Lower leg skin (tissue), 4 donors: ENCODE measurements at regions of chr14 and their contacts with region 1.

Region 1: GRCh38 chr14:83372271-83372670 is 1838.6 kb upstream of the SEL1L start:
- DNase-seq: no peak
- H3K4me3 ChIP-seq: no peak overlapping the region
- CTCF ChIP-seq: no peak
- POLR2A ChIP-seq: no peak

Region 2: DNA sequence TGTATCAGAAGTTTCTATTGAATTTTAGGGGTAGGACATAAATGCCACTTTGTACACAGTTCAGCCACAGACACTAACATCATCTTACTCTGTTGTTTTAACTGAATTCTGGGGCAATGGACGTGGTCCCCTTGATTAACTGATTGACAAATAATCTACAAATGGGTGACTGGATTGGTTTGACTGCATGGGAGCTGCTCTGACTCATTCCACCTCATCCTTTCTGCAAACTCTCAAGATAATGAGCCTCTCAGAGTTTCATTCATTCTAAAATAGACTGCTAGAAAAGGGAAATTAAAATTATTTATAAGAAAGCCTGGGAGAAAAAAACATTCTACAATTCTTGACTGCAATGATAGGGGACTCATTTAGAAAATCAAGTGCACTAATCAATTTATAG is 1268.3 kb before region 1 on chr14:
- intact Hi-C with region 1: loop called (anchors 5 kb)
- DNase-seq: no peak
- H3K4me3 ChIP-seq: no peak overlapping the region
- CTCF ChIP-seq: no peak
- POLR2A ChIP-seq: no peak

Region 3: GRCh38 chr14:83395321-83395720 is 23.1 kb after region 1 on chr14:
- intact Hi-C with region 1: no loop called
- DNase-seq: no peak
- H3K4me3 ChIP-seq: no peak overlapping the region
- CTCF ChIP-seq: no peak
- POLR2A ChIP-seq: no peak

Region 4: DNA sequence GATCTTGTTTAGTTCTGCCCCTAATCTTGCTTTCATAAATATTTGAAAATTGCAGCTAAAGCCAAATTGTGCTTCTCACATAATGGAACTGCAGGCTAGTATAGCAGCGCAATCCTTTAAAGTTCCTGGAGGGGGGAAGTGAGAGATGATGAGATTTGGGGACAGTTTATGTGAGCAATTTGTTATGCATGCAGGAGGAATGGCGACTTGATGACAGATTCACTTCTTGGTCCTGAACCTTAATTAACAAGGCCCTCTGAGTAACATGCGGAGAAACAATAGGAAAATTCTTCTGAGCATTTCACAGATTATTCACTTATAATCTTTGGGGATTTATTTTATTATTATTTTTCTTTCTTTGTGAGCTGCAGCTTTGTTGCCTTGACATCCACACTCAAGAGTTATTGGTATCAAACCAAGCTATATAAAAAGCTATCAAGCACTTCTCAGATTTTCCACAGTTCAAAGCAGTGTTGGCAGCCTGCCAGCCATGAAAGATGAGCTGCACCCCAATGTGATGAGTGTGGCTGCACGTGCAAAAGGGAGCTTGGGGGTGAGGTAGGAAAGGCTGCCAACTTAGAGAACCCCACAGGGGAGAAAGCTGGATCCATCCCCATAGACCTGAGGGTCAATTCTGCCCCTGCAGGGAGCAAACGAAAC is 495.4 kb after region 1 on chr14:
- intact Hi-C with region 1: no loop called
- DNase-seq: no peak
- H3K4me3 ChIP-seq: no peak overlapping the region
- CTCF ChIP-seq: no peak
- POLR2A ChIP-seq: no peak

Region 5: GRCh38 chr14:83960832-83961512 is 588.7 kb after region 1 on chr14:
- intact Hi-C with region 1: no loop called
- DNase-seq: no peak
- H3K4me3 ChIP-seq: no peak overlapping the region
- CTCF ChIP-seq: no peak
- POLR2A ChIP-seq: no peak